Transverse colon (tissue), 4 donors: ENCODE measurements at regions of chrX and their contacts with region 1.

Region 1: DNA sequence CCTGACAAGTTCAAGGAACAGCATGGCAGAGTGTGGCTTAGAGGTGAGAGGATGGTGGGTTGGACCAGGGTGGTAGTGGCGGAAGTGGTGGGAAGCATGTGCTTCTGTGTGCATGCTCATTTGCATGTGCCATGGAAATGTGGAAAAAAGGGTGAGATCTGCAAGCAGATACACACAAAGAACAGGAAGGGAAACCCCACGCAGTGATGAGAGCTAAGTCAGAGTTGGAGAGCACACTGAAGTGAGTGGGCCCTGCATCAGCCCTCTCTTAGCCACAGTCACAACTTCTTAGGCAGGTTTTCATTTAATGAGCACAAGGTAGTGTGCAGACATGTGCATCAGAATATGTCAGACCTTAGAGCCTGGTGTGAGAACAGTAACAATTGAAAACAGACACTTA is 483.8 kb downstream of the AFF2 start:
- DNase-seq: no peak
- H3K4me3 ChIP-seq: no peak overlapping the region
- H3K27ac ChIP-seq: no peak overlapping the region
- H3K4me1 ChIP-seq: no peaks in the 10 kb centered on the region
- H3K27me3 ChIP-seq: no peaks in the 10 kb centered on the region
- CTCF ChIP-seq: no peak
- EP300 ChIP-seq: no peak
- POLR2A ChIP-seq: no peak

Region 2: DNA sequence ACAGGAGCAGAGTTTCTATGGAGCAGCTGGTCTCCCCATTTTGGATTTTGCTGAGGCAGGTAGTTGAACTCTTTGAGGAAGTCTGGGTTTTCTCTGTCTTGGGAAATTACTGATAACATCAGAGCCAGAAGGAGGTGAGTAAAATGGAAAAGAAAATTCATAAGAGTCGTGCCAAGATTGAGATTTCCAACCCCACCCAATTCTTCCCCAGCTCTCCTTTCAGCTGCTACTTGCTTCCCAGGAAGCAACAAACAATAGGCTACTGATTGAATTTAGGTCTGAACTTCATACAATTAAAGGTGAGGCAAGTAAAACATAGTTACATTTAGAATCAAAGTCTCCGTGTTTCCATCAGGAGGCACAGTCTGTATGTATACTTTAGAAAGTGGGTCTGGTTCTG is 1008.7 kb after region 1 on chrX:
- in situ Hi-C with region 1: no loop called
- intact Hi-C with region 1: loop called (anchors 5 kb)
- DNase-seq: no peak
- H3K4me3 ChIP-seq: no peak overlapping the region
- H3K27ac ChIP-seq: no peak overlapping the region
- H3K4me1 ChIP-seq: no peaks in the 10 kb centered on the region
- H3K27me3 ChIP-seq: no peaks in the 10 kb centered on the region
- CTCF ChIP-seq: no peak
- EP300 ChIP-seq: no peak
- POLR2A ChIP-seq: no peak